Activated T-helper 1 cell treated with anti-CD3 and anti-CD28 coated beads, Interleukin-12 subunit alpha, Interleukin-12 subunit beta, Interleukin-2, Interleukin-4 antibody, amounts not matched to agents 30 ng/mL and 10 ng/mL and 1 ng/mL, durations not matched to agents 14 hours and 24 hours and 36 hours (primary cell): ENCODE measurements at regions of chr3 and their contacts with region 1.

Region 1: GRCh38 chr3:139427283-139427993 is 38.0 kb upstream of the COPB2 start:
- DNase-seq: peak; percentile 9
- H3K4me3 Mint-ChIP-seq: no peak overlapping the region
- H3K27ac Mint-ChIP-seq: no peak overlapping the region
- H3K4me1 Mint-ChIP-seq: no peaks in the 10 kb centered on the region
- H3K27me3 Mint-ChIP-seq: no peaks in the 10 kb centered on the region

Region 2: GRCh38 chr3:139561959-139562676 is 134.7 kb after region 1 on chr3:
- intact Hi-C with region 1: loop called (anchors 1 kb)
- DNase-seq: no peak
- H3K4me3 Mint-ChIP-seq: no peak overlapping the region
- H3K27ac Mint-ChIP-seq: no peak overlapping the region
- H3K4me1 Mint-ChIP-seq: no peaks in the 10 kb centered on the region
- H3K27me3 Mint-ChIP-seq: no peaks in the 10 kb centered on the region

Region 3: DNA sequence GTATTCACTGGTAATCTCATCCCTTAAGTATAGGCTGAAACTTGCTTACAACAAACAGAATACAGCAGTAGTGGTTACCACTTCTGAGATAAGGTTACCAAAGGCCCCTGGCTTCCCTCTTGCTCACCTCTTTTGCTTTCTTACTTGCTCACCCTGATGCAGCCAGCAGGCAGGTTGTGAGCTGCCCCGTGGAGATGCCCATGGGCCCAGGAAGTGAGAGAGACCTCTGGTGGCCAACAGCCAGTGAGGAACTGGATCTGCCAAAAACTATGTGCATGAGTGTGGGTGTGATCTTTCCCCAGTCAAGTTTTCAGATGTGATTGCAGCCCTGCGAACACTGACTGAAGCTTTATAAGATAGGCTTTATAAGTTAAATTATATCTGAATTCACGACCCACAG is 201.6 kb after region 1 on chr3:
- intact Hi-C with region 1: loop called (anchors 1 kb)
- DNase-seq: no peak
- H3K4me3 Mint-ChIP-seq: no peak overlapping the region
- H3K27ac Mint-ChIP-seq: no peak overlapping the region
- H3K4me1 Mint-ChIP-seq: peaks cover 20% of the 10 kb centered on the region
- H3K27me3 Mint-ChIP-seq: no peaks in the 10 kb centered on the region

Region 4: DNA sequence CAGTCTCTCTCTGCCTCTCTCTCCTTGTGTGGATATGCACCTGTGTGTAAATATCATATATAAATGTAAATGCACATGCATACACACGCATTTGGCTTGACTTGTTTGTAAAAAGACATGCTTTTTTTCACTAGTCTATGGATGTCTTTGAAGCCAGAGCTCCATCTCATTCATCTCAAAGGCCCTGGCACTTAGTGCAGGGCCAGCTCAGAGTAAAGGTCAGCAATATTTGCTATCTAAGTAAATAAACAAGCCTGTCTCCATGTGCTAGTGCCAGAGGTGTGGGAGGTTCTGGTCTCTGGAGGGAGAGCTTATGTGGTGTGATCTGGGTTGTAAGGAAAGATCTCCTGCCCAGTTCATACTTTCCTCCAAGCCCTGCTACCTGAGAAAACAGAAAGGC is 513.2 kb after region 1 on chr3:
- intact Hi-C with region 1: loop called (anchors 5 kb)
- DNase-seq: no peak
- H3K4me3 Mint-ChIP-seq: no peak overlapping the region
- H3K27ac Mint-ChIP-seq: no peak overlapping the region
- H3K4me1 Mint-ChIP-seq: no peaks in the 10 kb centered on the region
- H3K27me3 Mint-ChIP-seq: peaks cover 27% of the 10 kb centered on the region

Region 5: DNA sequence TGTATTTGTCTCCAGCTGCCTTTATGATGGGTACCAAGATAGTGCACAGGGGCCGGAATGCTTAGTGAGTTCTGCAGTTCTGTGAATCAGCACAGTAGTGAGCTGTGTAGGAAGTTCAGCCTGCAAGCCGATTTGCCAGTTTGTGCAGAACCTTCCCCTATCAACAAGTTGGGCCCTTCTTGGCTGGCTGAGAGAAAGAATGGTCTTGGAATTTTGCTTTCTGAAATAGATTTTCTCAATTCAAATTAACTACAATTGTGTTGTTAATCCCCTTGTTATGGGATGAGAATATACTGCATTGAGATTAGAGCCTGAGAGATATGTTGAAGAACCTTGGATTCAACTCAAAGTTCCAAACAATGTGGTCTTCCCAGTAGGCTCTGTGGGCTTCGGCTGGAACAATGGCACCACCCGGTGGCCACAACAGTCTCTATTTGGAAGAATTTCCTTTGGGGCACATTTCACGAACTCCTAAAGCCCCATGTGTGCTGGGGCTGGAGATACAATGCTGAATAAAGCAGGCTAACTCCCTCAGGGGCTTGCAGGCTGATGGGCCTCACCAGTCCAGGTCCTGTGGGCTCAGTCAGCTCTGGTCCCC is 1309.5 kb after region 1 on chr3:
- intact Hi-C with region 1: loop called (anchors 5 kb)
- DNase-seq: no peak
- H3K4me3 Mint-ChIP-seq: no peak overlapping the region
- H3K27ac Mint-ChIP-seq: no peak overlapping the region
- H3K4me1 Mint-ChIP-seq: peaks cover 7% of the 10 kb centered on the region
- H3K27me3 Mint-ChIP-seq: no peaks in the 10 kb centered on the region